ENCODE measurements at regions of chr14 and their contacts with region 1.

Region 1: DNA sequence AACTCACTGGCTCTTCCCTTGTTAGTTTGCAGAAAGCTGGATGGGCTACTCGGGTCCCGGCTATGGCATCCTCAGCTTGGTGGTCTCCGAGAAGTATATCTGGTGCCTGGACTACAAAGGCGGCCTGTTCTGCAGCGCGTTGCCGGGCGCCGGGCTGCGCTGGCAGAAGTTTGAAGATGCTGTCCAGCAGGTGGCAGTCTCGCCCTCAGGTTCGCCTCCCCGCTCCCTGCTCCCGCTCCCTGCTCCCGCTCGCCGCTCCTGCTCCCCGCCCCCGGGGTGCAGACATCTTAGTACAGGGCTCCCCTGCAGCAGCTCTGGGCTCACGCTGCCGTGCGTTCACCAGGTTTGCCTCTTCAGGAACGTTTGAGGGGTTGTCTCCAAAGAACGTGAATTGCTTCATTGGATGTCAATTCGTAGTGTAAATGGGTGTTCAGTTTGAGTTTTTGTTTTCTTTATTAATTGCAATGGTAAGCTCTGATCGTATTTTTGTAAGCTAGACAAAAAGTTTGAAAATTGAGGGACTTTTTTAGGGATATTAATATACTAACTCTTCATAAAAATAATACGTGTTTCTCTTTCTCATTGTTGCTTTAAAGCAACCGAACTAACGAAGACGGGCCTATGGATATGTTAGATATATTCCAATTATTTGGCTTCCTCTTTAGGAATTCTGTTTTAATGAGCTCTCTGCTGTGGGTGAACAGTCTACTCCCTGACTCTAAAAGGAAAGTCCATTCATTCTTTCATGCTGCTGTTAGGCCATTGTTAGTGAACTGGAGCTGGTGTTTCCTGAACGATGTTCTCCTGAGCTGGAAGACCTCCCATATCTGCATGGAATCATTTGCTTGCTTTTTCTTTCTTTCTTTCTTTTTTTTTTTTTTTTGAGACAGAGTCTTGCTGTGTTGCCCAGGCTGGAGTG is 71.3 kb downstream of the ANKRD9 start:
- DNase-seq: peak; percentile 16 to 86
- H3K4me3 ChIP-seq: peak overlapping the region; percentile 13 to 42
- H3K27ac ChIP-seq: no peak overlapping the region
- H3K4me1 ChIP-seq: no peaks in the 10 kb centered on the region
- H3K27me3 ChIP-seq: no peaks in the 10 kb centered on the region
- CTCF ChIP-seq: peak; percentile 76 to 85 (median 76)

Region 2: DNA sequence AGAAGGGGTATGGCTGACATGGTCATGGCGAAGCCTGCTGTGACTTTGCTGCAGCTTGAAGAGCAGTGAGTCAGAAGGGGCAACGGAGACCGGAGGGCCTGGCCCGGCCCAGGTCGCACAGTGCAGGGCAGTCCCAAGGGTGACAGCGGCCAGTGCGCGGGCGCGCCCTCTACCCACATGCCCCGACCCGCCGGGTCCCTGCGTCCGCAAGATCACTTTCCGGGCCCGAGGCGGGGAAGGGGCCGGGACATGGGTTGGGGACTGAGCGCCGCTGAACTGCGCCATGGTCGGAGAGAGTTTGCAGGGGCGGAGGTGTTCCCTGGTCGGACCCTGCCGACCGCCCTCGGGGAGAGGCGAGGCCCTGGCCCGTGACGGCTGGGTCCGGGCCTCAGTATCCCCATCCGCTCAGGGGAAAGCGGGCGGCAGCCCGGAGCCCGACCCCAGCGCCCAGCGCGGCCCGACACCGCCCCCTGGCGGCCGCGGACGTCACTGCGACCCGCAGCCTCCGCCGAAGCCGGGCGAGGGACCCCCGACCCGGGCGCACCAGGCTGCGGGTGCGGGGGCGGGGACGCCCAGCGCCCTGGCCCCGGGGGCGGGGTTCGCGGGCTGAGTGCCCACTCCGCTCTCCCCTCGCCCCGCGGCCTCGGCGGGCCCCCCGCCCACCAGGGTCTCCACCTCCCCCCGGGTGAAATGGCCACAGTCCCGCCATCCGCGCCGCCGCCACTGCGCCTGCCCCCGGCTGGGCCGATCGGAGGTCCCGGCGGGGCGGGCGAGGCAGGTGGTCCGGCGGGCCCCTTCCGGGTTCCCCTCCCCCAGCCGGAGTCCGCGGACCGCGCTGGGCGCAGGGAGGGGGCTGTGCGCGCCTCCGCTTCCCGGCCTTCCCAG is 78.5 kb after region 1 on chr14:
- intact Hi-C with region 1: loop called (anchors 1 kb)
- DNase-seq: no peak
- H3K4me3 ChIP-seq: peak overlapping the region; percentile 77 to 99
- H3K27ac ChIP-seq: peak overlapping the region in 1 of 2 donors; percentile 6
- H3K4me1 ChIP-seq: peaks cover 4 to 7% of the 10 kb centered on the region in 2 donors
- H3K27me3 ChIP-seq: no peaks in the 10 kb centered on the region
- CTCF ChIP-seq: peak; percentile 59 to 99 (median 64)